ENCODE measurements at regions of chr14 and their contacts with region 1.

Region 1: GRCh38 chr14:68947802-68948201 is 31.3 kb downstream of the ACTN1 start:
- DNase-seq: peak; percentile 87 to 97
- H3K4me3 ChIP-seq: peak overlapping the region; percentile 13 to 36
- H3K27ac ChIP-seq: peak overlapping the region; percentile 97 to 100
- H3K4me1 ChIP-seq: peaks cover 24 to 100% (median 96%) of the 10 kb centered on the region in 4 donors
- H3K27me3 ChIP-seq: no peaks in the 10 kb centered on the region
- CTCF ChIP-seq: no peak

Region 2: GRCh38 chr14:69043596-69044260 is 95.9 kb after region 1 on chr14:
- intact Hi-C with region 1: loop called (anchors 2 kb)
- DNase-seq: peak; percentile 61 to 81
- H3K4me3 ChIP-seq: no peak overlapping the region
- H3K27ac ChIP-seq: peak overlapping the region; percentile 87 to 91
- H3K4me1 ChIP-seq: peaks cover 0 to 99% (median 72%) of the 10 kb centered on the region in 4 donors
- H3K27me3 ChIP-seq: no peaks in the 10 kb centered on the region
- CTCF ChIP-seq: no peak